Esophagus muscularis mucosa (tissue), 4 donors: ENCODE measurements at regions of chr9 and their contacts with region 1.

Region 1: GRCh38 chr9:136631038-136632000 is 31.4 kb upstream of the EGFL7 start:
- DNase-seq: no peak
- H3K4me3 ChIP-seq: no peak overlapping the region
- H3K27ac ChIP-seq: no peak overlapping the region
- H3K4me1 ChIP-seq: peaks cover 9 to 27% (median 16%) of the 10 kb centered on the region in 4 donors
- H3K27me3 ChIP-seq: peaks cover 0 to 33% (median 0%) of the 10 kb centered on the region in 4 donors
- CTCF ChIP-seq: peak; percentile 81 to 87 (median 82)
- EP300 ChIP-seq: no peak
- POLR2A ChIP-seq: no peak

Region 2: GRCh38 chr9:136225748-136226679 is 405.3 kb before region 1 on chr9:
- intact Hi-C with region 1: no loop called
- DNase-seq: no peak
- H3K4me3 ChIP-seq: no peak overlapping the region
- H3K27ac ChIP-seq: no peak overlapping the region
- H3K4me1 ChIP-seq: no peaks in the 10 kb centered on the region
- H3K27me3 ChIP-seq: no peaks in the 10 kb centered on the region
- CTCF ChIP-seq: peak; percentile 49 to 74 (median 53)
- EP300 ChIP-seq: no peak
- POLR2A ChIP-seq: no peak

Region 3: GRCh38 chr9:136488247-136489214 is 142.8 kb before region 1 on chr9:
- intact Hi-C with region 1: loop called (anchors 1 kb)
- DNase-seq: no peak
- H3K4me3 ChIP-seq: no peak overlapping the region
- H3K27ac ChIP-seq: no peak overlapping the region
- H3K4me1 ChIP-seq: peaks cover 25 to 38% (median 28%) of the 10 kb centered on the region in 4 donors
- H3K27me3 ChIP-seq: no peaks in the 10 kb centered on the region
- CTCF ChIP-seq: peak in 2 of 3 experiments; percentile 98 to 99
- EP300 ChIP-seq: no peak
- POLR2A ChIP-seq: no peak